ENCODE measurements at regions of chr6 and their contacts with region 1.

Region 1: DNA sequence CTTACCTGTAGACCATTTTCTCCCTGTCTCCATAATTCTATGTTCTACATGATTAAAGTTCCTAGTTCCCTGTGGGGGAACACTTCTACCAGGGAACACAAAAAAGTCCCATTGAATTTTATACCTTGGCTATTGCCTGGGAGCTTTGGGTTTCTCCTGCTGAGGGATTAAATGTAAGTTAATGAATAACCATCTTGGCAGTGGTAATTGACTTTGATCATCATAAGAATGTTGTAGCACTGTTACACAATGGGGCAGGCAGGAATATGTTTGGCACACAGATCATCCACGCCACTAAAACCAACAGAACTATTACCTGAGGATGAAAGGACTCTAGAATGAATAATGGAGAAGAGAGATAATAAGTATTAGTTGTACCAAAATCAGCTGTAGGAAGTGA is 1106.2 kb upstream of the GJE1 start:
- DNase-seq: no peak
- H3K4me3 ChIP-seq: no peak overlapping the region
- CTCF ChIP-seq: no peak
- POLR2A ChIP-seq: no peak

Region 2: DNA sequence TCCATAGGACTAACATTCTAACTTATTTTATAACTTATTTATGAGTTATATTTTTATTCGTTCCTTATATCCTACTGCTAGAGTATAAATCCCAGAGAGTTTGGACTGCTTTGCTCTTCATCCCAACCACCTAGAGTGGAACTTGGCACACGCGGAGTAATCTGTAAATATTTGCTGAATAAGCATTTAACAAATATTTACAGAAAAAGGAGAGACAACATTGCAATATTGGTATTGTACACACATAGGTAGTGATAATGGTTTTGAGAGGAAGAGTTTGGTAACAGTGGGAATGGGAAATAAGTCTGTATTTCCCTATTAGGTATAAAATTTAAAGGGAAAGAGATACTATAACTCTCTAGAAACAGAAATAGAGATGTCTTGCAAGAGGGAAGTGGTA is 1017.2 kb before region 1 on chr6:
- intact Hi-C with region 1: loop called (anchors 5 kb)
- DNase-seq: no peak
- H3K4me3 ChIP-seq: no peak overlapping the region
- CTCF ChIP-seq: no peak
- POLR2A ChIP-seq: no peak

Region 3: DNA sequence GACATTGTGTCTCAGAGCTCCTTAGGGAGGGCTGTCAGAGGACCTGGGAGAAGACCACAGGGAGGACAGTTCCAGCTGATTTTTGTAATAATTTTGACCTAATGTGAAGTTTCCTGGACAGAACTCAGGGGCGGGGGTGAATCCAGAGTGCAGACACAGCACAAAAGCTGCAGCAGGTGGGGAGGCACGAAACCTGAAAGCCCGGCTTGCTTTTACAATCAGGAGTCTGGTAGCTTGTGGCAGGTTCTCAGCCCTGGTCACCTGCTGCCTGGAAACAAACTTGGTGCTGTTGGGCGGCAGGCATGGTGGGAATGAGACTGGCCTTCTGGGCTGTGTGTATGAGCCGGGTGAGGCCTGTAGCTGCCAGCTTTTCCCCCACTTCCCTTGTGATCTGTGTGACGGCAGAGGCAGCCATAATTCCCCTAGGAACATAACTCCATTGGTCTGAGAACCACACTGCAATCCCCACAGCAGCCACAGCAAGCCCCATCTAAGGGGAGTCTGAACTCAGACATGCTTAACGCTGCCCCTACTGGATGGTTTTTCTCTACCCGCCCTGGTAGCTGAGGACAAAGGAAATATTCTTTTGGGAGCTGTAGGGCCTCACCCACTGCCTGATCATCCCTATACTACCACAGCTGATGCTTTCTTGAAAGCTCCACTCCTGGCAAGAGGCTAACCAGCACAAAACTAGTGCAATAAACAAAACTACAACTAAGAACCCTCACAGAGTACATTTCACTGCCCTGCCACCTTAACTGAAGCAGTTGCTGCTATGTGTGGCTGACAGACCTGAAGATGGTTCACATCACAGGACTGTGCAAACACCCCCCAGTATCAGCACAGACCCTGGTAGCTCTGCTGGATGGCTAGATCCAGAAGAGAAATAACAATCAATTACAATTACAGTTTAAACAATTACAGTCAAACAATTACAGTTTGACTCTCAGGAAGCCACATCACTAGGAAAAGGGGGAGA is 51.1 kb after region 1 on chr6:
- intact Hi-C with region 1: loop called (anchors 2 kb)
- DNase-seq: no peak
- H3K4me3 ChIP-seq: no peak overlapping the region
- CTCF ChIP-seq: no peak
- POLR2A ChIP-seq: no peak

Measured in lower leg skin (tissue), 4 donors.